ENCODE measurements at regions of chr17 and their contacts with region 1.

Region 1: GRCh38 chr17:74961657-74962490 is 10.7 kb downstream of the HID1 start:
- DNase-seq: peak; percentile 89
- H3K4me3 Mint-ChIP-seq: no peak overlapping the region
- H3K27ac Mint-ChIP-seq: no peak overlapping the region
- H3K4me1 Mint-ChIP-seq: peaks cover 9% of the 10 kb centered on the region
- H3K27me3 Mint-ChIP-seq: peaks cover 38% of the 10 kb centered on the region

Region 2: GRCh38 chr17:74730491-74731346 is 231.2 kb before region 1 on chr17:
- CTCF ChIA-PET with region 1: no interaction called
- DNase-seq: peak; percentile 65
- H3K4me3 Mint-ChIP-seq: no peak overlapping the region
- H3K27ac Mint-ChIP-seq: peak overlapping the region; percentile 53
- H3K4me1 Mint-ChIP-seq: peaks cover 32% of the 10 kb centered on the region
- H3K27me3 Mint-ChIP-seq: peaks cover 12% of the 10 kb centered on the region

Region 3: GRCh38 chr17:74923533-74924249 is 38.2 kb before region 1 on chr17:
- CTCF ChIA-PET with region 1: interaction called, 152 read pairs
- DNase-seq: peak; percentile 81
- H3K4me3 Mint-ChIP-seq: no peak overlapping the region
- H3K27ac Mint-ChIP-seq: no peak overlapping the region
- H3K4me1 Mint-ChIP-seq: peaks cover 5% of the 10 kb centered on the region
- H3K27me3 Mint-ChIP-seq: peaks cover 100% of the 10 kb centered on the region

Region 4: GRCh38 chr17:74972107-74972972 is 10.5 kb after region 1 on chr17 and contains the start of gene HID1:
- CTCF ChIA-PET with region 1: interaction called, 63 read pairs
- DNase-seq: peak; percentile 84
- H3K4me3 Mint-ChIP-seq: peak within 1 kb of the TSS; percentile 74
- H3K27ac Mint-ChIP-seq: no peak within 1 kb of the TSS
- H3K4me1 Mint-ChIP-seq: peaks cover 6% of the 10 kb centered on the region
- H3K27me3 Mint-ChIP-seq: peaks cover 72% of the 10 kb centered on the region

Region 5: DNA sequence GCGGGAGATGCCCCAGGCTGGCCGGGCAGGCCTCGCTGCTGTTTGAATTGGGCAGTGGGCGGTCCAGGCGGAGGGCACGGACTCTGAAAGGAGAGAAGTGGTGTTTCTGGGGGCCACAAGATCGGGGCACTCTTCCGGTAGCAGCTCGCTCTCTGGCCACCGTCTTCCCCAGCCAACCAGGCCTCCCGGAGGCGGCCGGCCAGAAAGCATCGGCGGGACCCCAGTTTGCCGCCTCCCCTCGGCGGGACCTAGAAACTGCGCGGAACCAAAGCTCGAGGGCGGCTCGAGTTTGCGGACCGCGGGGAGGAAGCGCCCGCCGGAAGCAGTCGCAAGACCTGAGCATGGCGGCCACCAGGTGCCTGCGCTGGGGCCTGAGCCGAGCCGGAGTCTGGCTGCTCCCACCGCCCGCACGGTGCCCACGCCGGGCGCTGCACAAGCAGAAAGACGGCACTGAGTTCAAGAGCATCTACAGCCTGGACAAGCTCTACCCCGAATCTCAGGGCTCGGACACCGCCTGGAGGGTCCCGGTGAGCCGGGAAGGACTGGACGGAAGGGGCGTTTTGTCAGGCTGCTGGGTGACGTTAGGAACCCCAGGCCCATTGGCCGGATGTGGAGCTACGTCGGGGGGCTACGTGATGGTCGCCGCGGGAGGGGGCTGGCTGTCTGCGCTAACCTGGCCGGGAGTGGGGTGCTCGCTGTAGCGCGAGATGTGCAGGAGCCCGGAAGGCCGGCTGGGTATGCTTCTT is 50.6 kb after region 1 on chr17 and contains the start of gene MRPL58:
- CTCF ChIA-PET with region 1: interaction called, 122 read pairs
- DNase-seq: peak; percentile 88
- H3K4me3 Mint-ChIP-seq: peak within 1 kb of the TSS; percentile 95
- H3K27ac Mint-ChIP-seq: peak within 1 kb of the TSS; percentile 92
- H3K4me1 Mint-ChIP-seq: peaks cover 29% of the 10 kb centered on the region
- H3K27me3 Mint-ChIP-seq: peaks cover 18% of the 10 kb centered on the region

Region 6: DNA sequence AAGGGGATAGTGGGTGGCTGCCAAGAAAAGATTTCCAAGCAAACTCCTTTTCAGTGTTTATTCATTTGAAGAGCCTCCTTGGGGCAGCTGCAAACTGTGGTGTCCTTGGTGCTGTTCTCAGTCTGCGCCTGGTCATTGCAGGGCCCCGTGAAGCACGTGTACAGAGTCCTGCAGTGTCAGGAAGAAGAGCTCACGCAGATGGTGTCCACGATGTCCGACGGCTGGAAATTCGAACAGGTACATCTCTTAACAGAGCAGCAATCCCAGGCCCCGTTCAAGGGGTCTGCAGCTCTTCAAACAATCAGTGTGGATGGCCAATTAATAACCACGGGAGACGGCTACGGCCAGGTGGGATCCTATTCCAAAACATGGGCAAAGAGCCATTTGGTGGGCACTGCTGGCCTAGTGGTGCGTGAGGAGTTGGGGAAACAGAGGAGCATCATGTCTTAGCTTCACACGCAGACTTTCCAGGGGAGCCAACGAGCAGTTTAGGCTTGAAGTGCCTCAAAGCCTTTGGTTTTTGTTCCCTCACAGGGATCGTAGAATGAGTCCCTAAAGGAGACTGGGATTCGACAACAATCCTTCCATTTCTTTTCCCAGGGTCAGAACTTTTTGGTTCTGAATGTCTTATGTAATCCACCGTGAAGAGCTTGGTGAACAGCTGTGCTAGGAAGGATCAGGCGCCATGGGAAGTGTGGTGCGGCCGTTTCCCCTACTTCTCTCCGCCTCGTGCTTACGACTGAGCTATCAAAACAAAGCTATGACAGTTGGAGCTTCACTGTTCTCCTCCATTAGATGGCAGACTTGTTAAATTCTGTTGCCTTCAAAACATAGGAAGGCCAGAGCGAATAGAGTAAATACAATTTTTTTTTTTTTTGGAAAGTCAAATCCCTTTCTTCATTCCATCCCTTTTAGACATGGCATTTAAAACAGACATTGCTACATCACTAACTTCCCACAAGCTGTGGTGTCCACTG is 97.8 kb after region 1 on chr17:
- CTCF ChIA-PET with region 1: interaction called, 12 read pairs
- DNase-seq: no peak
- H3K4me3 Mint-ChIP-seq: no peak overlapping the region
- H3K27ac Mint-ChIP-seq: peak overlapping the region; percentile 66
- H3K4me1 Mint-ChIP-seq: peaks cover 32% of the 10 kb centered on the region
- H3K27me3 Mint-ChIP-seq: no peaks in the 10 kb centered on the region

Region 7: GRCh38 chr17:75199886-75200618 is 238.2 kb after region 1 on chr17:
- CTCF ChIA-PET with region 1: interaction called, 69 read pairs
- DNase-seq: no peak
- H3K4me3 Mint-ChIP-seq: no peak overlapping the region
- H3K27ac Mint-ChIP-seq: no peak overlapping the region
- H3K4me1 Mint-ChIP-seq: peaks cover 12% of the 10 kb centered on the region
- H3K27me3 Mint-ChIP-seq: peaks cover 10% of the 10 kb centered on the region